ENCODE measurements at regions of chr3 and their contacts with region 1.

Region 1: DNA sequence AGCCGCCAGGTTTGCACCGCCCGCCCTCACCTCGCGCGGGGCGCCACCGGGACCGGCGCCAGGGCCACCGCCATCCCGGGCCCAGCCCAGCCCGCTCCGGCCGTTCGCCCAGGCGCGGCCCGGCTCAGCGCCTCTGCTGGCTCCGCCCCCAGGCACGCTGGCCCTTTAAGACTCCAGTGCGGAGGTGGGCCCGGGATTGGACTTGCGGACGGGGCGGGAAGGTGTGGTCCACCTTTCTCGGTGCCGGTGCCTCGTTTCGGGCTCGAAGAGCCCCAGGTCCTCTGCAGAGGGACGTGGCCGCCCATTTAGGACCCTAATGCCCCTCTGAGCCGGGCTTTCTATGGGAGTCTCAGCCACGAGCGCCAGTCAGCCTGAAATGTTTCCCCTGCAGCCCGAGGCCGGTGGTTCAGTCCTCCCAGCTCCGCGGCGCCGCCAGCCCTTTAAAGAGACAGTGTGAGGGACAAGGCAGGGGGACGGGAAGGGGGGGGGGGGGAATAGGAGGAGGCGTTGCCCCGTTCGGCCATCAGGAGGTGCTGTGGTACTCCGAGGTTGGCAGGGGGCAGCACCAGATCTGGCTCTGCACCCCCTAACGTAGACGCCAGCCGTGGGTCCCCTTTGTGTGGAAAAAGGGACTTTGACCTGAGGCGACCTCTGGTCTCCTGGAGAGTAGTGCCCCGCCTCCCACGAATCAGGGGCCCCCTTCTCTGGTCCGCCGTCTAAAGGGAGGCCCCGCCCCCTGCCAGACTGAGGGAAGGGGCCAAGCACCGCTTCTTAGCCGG is 1.0 kb downstream of the HYAL2 start:
- DNase-seq: peak; percentile 88 to 92 (median 90)
- H3K4me3 ChIP-seq: peak overlapping the region; percentile 69 to 88 (median 82)
- H3K27ac ChIP-seq: peak overlapping the region; percentile 98 to 99
- H3K4me1 ChIP-seq: peaks cover 2 to 80% (median 58%) of the 10 kb centered on the region in 4 experiments
- H3K27me3 ChIP-seq: no peaks in the 10 kb centered on the region

Region 2: DNA sequence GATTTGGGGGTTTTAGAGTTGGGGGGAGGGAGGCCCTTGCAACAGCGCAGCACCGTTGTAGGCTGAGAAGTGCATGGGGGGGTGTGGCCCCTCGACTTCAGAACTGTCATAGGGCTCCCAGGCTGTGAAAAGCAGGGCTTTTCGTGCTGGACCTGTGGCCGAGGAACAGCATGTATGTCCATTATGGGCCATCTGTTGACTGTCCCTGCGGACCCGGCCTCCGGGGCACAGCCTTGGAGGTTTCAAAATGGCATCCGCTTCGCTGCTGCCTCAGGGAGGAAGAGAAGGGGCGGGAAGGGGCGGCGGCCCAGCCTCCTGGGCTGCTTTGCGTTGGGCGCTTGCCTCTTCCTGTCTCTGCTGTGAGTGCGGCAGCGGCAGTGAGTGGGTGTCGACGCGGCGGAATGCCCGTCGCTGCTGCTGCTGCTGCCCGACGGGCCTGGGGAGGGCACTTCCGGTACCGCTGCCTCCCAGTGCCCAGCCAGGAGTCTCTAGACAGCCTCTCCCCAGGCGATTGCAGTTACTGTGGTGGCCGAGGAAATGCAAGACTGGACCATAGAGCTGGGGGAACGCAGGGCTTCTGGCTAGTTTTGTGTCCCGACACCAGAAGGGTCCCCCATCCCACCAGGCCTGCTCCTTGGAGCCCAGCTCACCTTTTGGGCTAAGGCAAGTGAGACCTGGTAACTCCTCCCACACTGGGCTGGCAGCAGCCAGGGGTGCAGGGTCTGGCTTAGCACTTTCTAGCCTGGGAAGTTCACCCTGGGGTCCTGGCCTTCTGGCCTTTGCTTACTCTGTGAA is 83.6 kb before region 1 on chr3:
- CTCF ChIA-PET with region 1: no interaction called
- POLR2A ChIA-PET with region 1: no interaction called
- DNase-seq: peak; percentile 74 to 90 (median 86)
- H3K4me3 ChIP-seq: peak overlapping the region; percentile 81 to 99 (median 97)
- H3K27ac ChIP-seq: peak overlapping the region; percentile 80 to 93
- H3K4me1 ChIP-seq: peaks cover 11 to 77% (median 73%) of the 10 kb centered on the region in 4 experiments
- H3K27me3 ChIP-seq: no peaks in the 10 kb centered on the region

Region 3: DNA sequence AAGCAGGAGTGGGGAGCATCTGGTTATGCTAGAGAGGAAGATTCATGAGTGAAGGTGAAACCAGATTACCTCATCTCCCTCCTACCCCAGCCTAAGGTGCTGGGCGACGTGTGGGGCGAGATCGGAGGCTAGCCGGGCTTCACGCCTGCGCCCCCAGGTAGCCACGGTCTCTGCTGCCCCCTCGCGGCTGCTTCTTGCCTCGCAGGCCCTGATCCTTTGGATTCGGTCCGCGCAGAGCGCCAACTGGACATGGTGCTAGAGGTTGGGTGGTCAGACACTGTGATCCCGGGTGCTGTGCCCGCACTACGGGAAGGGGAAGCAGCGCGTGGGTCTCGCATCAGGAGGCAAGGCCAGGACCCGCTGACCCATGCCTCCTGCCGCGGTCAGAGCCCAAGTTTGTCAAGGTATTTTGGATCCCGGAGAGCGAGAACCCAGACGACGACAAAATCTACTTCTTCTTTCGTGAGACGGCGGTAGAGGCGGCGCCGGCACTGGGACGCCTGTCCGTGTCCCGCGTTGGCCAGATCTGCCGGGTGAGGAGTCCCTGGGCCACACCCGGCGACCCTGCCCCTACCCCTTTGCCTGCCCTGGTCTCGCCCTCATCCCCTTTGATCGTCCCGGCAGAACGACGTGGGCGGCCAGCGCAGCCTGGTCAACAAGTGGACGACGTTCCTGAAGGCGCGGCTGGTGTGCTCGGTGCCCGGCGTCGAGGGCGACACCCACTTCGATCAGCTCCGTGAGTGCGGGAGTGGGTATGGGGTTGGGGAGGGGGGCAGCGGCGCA is 48.4 kb before region 1 on chr3:
- CTCF ChIA-PET with region 1: interaction called, 11 read pairs
- POLR2A ChIA-PET with region 1: no interaction called
- DNase-seq: peak; percentile 65 to 82 (median 80)
- H3K4me3 ChIP-seq: peak overlapping the region in 5 of 7 experiments; percentile 35 to 73 (median 44)
- H3K27ac ChIP-seq: no peak overlapping the region
- H3K4me1 ChIP-seq: peaks cover 0 to 33% (median 25%) of the 10 kb centered on the region in 4 experiments
- H3K27me3 ChIP-seq: peaks cover 0 to 63% (median 22%) of the 10 kb centered on the region in 5 experiments

Region 4: GRCh38 chr3:50298836-50299637 is 22.5 kb before region 1 on chr3 and contains the starts of genes HYAL3 and NAA80:
- CTCF ChIA-PET with region 1: interaction called, 105 read pairs
- POLR2A ChIA-PET with region 1: no interaction called
- DNase-seq: peak; percentile 99
- H3K4me3 ChIP-seq: peak within 1 kb of the TSS; percentile 59 to 98 (median 80)
- H3K27ac ChIP-seq: peak within 1 kb of the TSS; percentile 66 to 86
- H3K4me1 ChIP-seq: peaks cover 7 to 34% (median 31%) of the 10 kb centered on the region in 4 experiments
- H3K27me3 ChIP-seq: no peaks in the 10 kb centered on the region

Region 5: DNA sequence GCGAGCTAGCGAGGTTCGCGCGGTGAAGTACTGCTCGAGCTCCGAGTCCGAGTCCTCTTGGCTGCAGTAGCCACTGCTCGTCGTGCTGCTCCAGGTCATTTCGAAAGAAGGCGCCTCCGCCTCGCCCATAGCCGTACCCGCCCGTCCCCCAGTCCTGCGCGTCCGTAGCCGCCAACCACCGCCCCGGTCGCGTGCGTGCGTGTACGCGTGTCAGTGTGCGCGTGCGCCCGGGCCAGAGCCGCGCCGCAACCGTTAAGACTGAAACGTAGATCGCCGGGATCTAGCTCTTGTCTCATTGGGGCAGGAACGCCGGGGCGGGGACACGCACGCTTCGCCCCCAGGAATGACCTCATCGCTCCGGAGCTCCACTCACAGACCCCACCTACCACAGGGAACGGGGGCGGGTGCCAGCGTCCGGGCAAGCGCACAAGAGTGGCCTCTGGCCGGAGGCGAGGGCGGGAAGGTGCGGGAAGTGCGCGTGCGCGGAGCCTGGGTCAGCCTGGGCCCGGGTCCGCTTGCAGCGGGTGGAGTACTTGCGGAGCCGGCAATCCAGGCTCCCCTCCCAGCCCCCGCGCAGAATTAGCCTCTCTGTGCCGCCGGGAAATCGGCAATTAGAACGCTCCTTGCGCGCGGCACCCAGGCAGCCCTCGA is 15.8 kb after region 1 on chr3:
- CTCF ChIA-PET with region 1: interaction called, 16 read pairs
- POLR2A ChIA-PET with region 1: interaction called, 3 read pairs
- DNase-seq: peak; percentile 97 to 99 (median 98)
- H3K4me3 ChIP-seq: peak overlapping the region; percentile 64 to 91 (median 79)
- H3K27ac ChIP-seq: peak overlapping the region; percentile 93 to 97
- H3K4me1 ChIP-seq: peaks cover 15 to 78% (median 71%) of the 10 kb centered on the region in 4 experiments
- H3K27me3 ChIP-seq: no peaks in the 10 kb centered on the region